Spleen (tissue), 13 donors: ENCODE measurements at regions of chr4 and their contacts with region 1.

Region 1: DNA sequence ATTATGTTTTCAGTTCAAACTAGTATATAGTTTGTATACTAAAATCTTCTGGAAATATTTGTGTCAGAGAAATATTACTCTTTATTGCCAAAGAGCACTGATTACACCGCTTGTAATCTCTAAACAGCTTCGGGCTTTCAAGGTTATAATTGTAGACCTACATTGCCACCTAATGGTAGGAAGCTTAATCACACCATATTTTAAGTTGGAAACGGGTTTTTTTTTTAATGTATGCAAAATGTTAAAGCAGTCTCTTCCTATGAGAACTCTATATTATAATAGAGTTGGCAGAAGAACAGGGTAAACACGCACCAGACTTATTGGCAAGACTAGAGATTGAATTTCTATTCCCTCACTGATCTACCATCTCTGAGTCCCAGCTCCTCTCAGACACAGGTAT is 19.5 kb upstream of the NFXL1 start:
- DNase-seq: no peak
- H3K4me3 ChIP-seq: no peak overlapping the region
- H3K27ac ChIP-seq: no peak overlapping the region
- H3K4me1 ChIP-seq: peaks cover 0 to 7% (median 4%) of the 10 kb centered on the region in 6 donors
- H3K27me3 ChIP-seq: peaks cover 0 to 5% (median 0%) of the 10 kb centered on the region in 7 donors
- CTCF ChIP-seq: peak; percentile 21 to 75 (median 66)
- POLR2A ChIP-seq: no peak

Region 2: DNA sequence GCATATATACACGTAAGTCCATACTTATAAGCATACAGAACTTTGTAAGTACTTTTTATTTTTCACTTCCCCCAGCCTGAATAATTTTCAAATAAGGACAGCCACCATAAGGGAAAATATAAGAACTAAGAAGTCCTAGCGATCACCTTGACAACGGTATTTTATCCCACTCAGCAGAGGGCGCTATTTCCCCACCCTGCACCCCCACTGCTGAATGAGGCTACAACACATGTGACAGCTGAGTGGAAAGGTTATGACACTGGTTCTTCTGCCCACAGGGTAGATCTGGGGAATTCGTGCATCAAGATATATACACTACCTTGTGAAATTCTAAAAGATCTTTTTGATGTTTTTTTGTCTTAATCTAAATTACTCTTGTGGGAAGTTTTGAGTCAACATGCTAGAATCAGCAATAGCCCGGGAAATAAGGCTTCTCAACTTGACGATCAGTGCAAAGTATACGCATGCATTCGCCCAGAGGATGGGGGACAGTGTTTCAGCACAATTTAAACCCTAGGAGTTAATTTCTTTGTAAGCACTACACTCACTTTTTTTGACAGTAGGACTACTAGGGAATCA is 247.5 kb before region 1 on chr4:
- intact Hi-C with region 1: loop called (anchors 10 kb)
- DNase-seq: peak; percentile 76
- H3K4me3 ChIP-seq: no peak overlapping the region
- H3K27ac ChIP-seq: no peak overlapping the region
- H3K4me1 ChIP-seq: no peaks in the 10 kb centered on the region
- H3K27me3 ChIP-seq: no peaks in the 10 kb centered on the region
- CTCF ChIP-seq: peak in 10 of 11 experiments; percentile 32 to 67 (median 58)
- POLR2A ChIP-seq: no peak